Activated naive CD4-positive, alpha-beta T cell treated with anti-CD3 and anti-CD28 coated beads for 36 hours (primary cell): ENCODE measurements at regions of chr4 and their contacts with region 1.

Region 1: GRCh38 chr4:70651864-70652506 is 14.3 kb downstream of the JCHAIN start:
- DNase-seq: peak; percentile 9
- H3K4me3 Mint-ChIP-seq: no peak overlapping the region
- H3K27ac Mint-ChIP-seq: no peak overlapping the region
- H3K4me1 Mint-ChIP-seq: no peaks in the 10 kb centered on the region
- H3K27me3 Mint-ChIP-seq: peaks cover 1% of the 10 kb centered on the region

Region 2: DNA sequence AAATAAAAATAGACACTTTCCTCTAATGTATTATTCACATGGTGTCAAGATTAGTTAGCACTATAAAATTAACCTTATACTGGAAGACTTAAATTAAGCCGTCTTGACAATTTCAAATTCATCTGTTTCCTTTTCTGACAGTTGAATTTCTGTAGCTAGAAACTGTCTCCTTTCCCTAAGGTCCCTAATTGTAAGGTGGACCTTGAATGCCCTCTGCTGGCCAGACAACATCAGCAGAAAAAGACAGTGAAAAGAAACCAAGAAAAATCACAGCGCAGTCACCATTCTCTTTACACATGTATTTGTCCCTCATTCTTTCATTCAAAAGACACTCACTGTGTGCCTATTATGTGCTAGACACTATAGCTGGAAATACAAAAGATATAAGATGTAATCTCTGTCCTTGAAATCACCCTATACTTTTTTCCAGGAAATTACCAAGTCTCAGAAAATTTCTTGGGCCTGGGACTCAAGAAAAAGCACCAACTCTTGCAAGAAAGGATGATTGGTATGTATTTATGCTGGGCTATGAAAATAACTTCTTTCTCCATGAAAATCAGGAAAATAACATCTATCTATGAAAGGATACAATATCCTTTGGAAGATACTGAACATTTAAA is 92.7 kb before region 1 on chr4:
- CTCF ChIA-PET with region 1: no interaction called
- intact Hi-C with region 1: no loop called
- DNase-seq: peak; percentile 73
- H3K4me3 Mint-ChIP-seq: no peak overlapping the region
- H3K27ac Mint-ChIP-seq: no peak overlapping the region
- H3K4me1 Mint-ChIP-seq: peaks cover 9% of the 10 kb centered on the region
- H3K27me3 Mint-ChIP-seq: no peaks in the 10 kb centered on the region

Region 3: GRCh38 chr4:70601422-70602039 is 50.5 kb before region 1 on chr4:
- CTCF ChIA-PET with region 1: interaction called, 4 read pairs
- intact Hi-C with region 1: loop called (anchors 1 kb)
- DNase-seq: peak; percentile 81
- H3K4me3 Mint-ChIP-seq: no peak overlapping the region
- H3K27ac Mint-ChIP-seq: no peak overlapping the region
- H3K4me1 Mint-ChIP-seq: no peaks in the 10 kb centered on the region
- H3K27me3 Mint-ChIP-seq: no peaks in the 10 kb centered on the region

Region 4: GRCh38 chr4:70948665-70949260 is 296.8 kb after region 1 on chr4:
- CTCF ChIA-PET with region 1: no interaction called
- intact Hi-C with region 1: loop called (anchors 1 kb)
- DNase-seq: no peak
- H3K4me3 Mint-ChIP-seq: no peak overlapping the region
- H3K27ac Mint-ChIP-seq: no peak overlapping the region
- H3K4me1 Mint-ChIP-seq: peaks cover 12% of the 10 kb centered on the region
- H3K27me3 Mint-ChIP-seq: no peaks in the 10 kb centered on the region

Region 5: DNA sequence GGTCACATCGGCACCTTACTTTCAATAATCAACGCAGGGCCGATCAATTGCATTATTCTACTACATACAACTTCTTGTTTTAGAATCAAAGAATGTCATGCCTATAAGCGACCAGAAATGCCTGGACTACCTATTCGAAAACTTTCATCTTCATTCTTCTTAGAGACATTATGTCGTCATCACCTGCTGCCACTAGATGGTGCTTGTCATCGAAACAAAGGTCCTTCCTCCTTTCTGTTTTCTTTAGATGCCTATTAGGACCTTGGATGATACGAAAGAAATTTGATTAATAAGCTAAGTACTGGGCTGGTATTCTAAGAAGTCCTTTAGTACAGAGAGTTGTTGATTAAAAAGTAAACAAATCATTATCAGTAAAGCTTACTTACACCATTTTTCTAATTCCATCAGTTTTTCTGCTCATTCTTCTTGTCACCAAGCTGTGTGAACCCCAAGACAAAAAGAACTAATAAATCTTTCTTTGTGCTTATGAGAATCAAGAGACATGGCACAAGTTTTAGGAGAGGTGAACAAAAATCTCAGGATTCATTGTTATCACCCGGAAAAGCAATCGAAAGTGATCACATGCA is 532.3 kb after region 1 on chr4:
- CTCF ChIA-PET with region 1: interaction called, 3 read pairs
- intact Hi-C with region 1: loop called (anchors 2 kb)
- DNase-seq: peak; percentile 69
- H3K4me3 Mint-ChIP-seq: no peak overlapping the region
- H3K27ac Mint-ChIP-seq: no peak overlapping the region
- H3K4me1 Mint-ChIP-seq: peaks cover 18% of the 10 kb centered on the region
- H3K27me3 Mint-ChIP-seq: peaks cover 35% of the 10 kb centered on the region

Region 6: DNA sequence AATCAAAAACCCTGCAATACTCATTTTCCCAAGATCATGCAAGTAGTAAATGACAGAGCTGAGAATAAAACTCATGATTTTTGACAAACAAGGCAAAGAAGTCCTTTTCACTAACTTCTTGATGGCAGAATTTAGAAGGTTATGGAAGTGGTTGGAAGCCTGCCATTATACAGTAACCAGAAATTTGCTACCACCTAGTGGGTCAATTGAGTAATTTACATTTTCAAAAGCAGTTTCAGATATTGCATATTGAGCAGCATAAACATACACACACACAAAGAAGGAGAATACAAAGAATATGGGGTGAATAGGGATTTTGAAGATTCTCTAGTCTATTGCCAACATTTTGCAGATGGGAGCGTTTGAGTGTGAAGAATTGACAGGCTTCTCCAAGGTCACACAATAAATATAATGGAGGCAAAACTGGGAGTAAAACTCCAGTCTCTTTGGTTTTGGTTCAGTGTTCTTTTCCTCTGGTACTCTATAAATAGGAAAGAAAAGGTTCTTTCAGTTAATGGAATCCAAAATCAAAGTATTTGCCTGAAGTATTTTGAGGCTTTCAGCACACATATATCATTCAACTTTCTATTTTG is 1061.7 kb after region 1 on chr4:
- CTCF ChIA-PET with region 1: interaction called, 4 read pairs
- intact Hi-C with region 1: loop called (anchors 1 kb)
- DNase-seq: no peak
- H3K4me3 Mint-ChIP-seq: no peak overlapping the region
- H3K27ac Mint-ChIP-seq: no peak overlapping the region
- H3K4me1 Mint-ChIP-seq: no peaks in the 10 kb centered on the region
- H3K27me3 Mint-ChIP-seq: no peaks in the 10 kb centered on the region